Endothelial cell of umbilical vein (primary cell): ENCODE measurements at regions of chr21 and their contacts with region 1.

Region 1: GRCh38 chr21:18545908-18546307 is 142.3 kb upstream of the TMPRSS15 start:
- DNase-seq: peak; percentile 84
- H3K4me3 ChIP-seq: no peak overlapping the region
- H3K27ac ChIP-seq: peak overlapping the region; percentile 15
- H3K4me1 ChIP-seq: no peaks in the 10 kb centered on the region
- H3K27me3 ChIP-seq: no peaks in the 10 kb centered on the region
- CTCF ChIP-seq: no peak
- POLR2A ChIP-seq: no peak

Region 2: DNA sequence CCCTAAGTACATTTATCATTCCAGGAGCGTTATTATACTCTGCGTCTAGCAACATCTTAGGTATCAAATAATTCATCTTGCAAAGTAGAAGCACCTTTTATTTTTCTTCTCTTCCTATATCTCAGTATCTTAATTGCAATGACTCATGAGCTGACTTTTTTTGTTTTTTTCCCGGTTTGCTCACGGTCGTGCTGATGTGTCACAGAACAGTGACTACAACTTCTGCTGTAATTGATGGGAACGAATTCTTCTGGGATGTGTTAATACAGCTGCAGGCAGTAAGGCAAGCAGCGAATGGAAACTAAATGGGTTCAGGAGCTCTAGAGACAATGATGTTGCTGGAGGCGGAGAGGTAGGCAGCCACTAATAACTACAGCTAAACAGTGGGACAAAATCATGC is 52.5 kb before region 1 on chr21:
- CTCF ChIA-PET with region 1: no interaction called
- POLR2A ChIA-PET with region 1: no interaction called
- dilution Hi-C with region 1: no loop called
- intact Hi-C with region 1: loop called (anchors 5 kb)
- DNase-seq: peak; percentile 54
- H3K4me3 ChIP-seq: no peak overlapping the region
- H3K27ac ChIP-seq: peak overlapping the region; percentile 41
- H3K4me1 ChIP-seq: peaks cover 2% of the 10 kb centered on the region
- H3K27me3 ChIP-seq: no peaks in the 10 kb centered on the region
- CTCF ChIP-seq: no peak
- POLR2A ChIP-seq: no peak

Region 3: DNA sequence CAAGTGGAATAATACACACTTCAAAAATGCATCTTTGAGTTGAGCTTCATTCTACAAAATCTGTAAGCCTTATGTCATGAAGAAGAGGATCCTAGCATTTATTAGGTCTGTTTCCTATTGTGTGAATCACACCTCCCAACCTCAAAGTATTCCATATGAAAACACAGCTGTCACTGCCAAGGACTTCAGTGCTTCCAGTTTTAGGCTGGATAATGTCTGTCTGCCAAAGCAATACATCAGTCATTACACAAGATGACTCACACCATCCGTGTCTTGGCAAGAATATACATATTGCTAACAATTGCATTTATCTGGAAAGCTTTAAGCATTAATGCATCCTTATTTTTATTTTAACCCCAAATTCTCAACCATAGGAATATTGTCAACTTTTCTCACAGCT is 16.7 kb before region 1 on chr21:
- CTCF ChIA-PET with region 1: interaction called, 5 read pairs
- POLR2A ChIA-PET with region 1: no interaction called
- dilution Hi-C with region 1: no loop called
- intact Hi-C with region 1: loop called (anchors 1 kb)
- DNase-seq: peak; percentile 91
- H3K4me3 ChIP-seq: no peak overlapping the region
- H3K27ac ChIP-seq: no peak overlapping the region
- H3K4me1 ChIP-seq: peaks cover 8% of the 10 kb centered on the region
- H3K27me3 ChIP-seq: no peaks in the 10 kb centered on the region
- CTCF ChIP-seq: no peak
- POLR2A ChIP-seq: no peak